ENCODE measurements at regions of chr2 and their contacts with region 1.

Region 1: GRCh38 chr2:53672881-53673522 is 94.6 kb upstream of the CHAC2 start:
- DNase-seq: no peak
- ATAC-seq: no peak
- H3K4me3 ChIP-seq: no peak overlapping the region
- H3K4me3 Mint-ChIP-seq: no peak overlapping the region
- H3K27ac ChIP-seq: no peak overlapping the region
- H3K27ac Mint-ChIP-seq: peak overlapping the region in 1 of 2 donors; percentile 65
- H3K4me1 ChIP-seq: no peaks in the 10 kb centered on the region
- H3K4me1 Mint-ChIP-seq: peaks cover 0 to 5% (median 2%) of the 10 kb centered on the region in 3 donors
- H3K27me3 ChIP-seq: no peaks in the 10 kb centered on the region
- H3K27me3 Mint-ChIP-seq: no peaks in the 10 kb centered on the region

Region 2: DNA sequence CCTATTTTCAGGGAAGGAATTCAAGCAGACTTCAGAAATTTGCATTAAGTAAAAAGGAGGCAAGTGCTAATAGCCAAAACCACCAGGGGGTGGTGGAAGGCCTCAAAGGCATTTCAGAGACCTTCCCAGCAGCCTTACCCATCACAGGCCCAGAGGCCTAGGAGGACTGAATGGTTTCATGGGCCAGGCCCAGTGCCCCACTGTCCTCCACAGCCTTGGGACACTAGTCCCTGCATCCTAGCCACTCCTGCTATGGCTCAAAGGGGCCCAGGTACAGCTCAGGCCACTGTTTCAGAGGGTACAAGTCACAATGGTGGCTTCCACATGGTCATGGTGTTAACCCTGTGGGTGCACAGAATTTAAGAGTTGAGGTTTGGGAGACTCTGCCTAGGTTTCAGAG is 36.0 kb after region 1 on chr2:
- CTCF ChIA-PET with region 1: no interaction called
- POLR2A ChIA-PET with region 1: interaction called in 1 of 2 experiments, 13 read pairs
- DNase-seq: no peak
- ATAC-seq: no peak
- H3K4me3 ChIP-seq: no peak overlapping the region
- H3K4me3 Mint-ChIP-seq: no peak overlapping the region
- H3K27ac ChIP-seq: no peak overlapping the region
- H3K27ac Mint-ChIP-seq: no peak overlapping the region
- H3K4me1 ChIP-seq: no peaks in the 10 kb centered on the region
- H3K4me1 Mint-ChIP-seq: peaks cover 0 to 6% (median 0%) of the 10 kb centered on the region in 3 donors
- H3K27me3 ChIP-seq: no peaks in the 10 kb centered on the region
- H3K27me3 Mint-ChIP-seq: no peaks in the 10 kb centered on the region

Region 3: GRCh38 chr2:54063967-54064535 is 391.0 kb after region 1 on chr2:
- CTCF ChIA-PET with region 1: no interaction called
- POLR2A ChIA-PET with region 1: no interaction called
- DNase-seq: no peak
- ATAC-seq: no peak
- H3K4me3 ChIP-seq: no peak overlapping the region
- H3K4me3 Mint-ChIP-seq: no peak overlapping the region
- H3K27ac ChIP-seq: no peak overlapping the region
- H3K27ac Mint-ChIP-seq: no peak overlapping the region
- H3K4me1 ChIP-seq: no peaks in the 10 kb centered on the region
- H3K4me1 Mint-ChIP-seq: peaks cover 0 to 5% (median 0%) of the 10 kb centered on the region in 3 donors
- H3K27me3 ChIP-seq: no peaks in the 10 kb centered on the region
- H3K27me3 Mint-ChIP-seq: no peaks in the 10 kb centered on the region

Measured in T-cell (primary cell).